ENCODE measurements at regions of chr1 and their contacts with region 1.

Region 1: DNA sequence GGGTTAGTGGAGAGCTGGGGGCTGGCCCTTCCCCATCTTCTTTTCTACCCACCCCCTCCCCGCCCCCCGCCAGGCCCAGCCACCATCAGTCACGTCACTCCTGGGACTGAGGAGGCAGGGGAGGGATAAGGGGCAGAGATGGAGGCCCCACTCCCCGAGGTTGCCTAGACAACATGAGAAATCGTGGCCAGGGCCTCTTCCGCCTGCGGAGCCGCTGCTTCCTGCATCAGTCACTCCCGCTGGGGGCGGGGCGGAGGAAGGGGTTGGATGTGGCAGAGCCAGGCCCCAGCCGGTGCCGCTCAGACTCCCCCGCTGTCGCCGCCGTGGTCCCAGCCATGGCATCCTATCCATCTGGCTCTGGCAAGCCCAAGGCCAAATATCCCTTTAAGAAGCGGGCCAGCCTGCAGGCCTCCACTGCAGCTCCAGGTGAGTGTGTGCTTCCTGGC is 1.2 kb downstream of the AMPD2 start:
- DNase-seq: peak; percentile 71
- H3K4me3 ChIP-seq: peak overlapping the region; percentile 83
- H3K27me3 ChIP-seq: no peaks in the 10 kb centered on the region
- CTCF ChIP-seq: no peak

Region 2: GRCh38 chr1:109483672-109484518 is 137.0 kb before region 1 on chr1 and contains the start of gene ATXN7L2:
- CTCF ChIA-PET with region 1: no interaction called
- POLR2A ChIA-PET with region 1: interaction called, 21 read pairs
- DNase-seq: peak; percentile 47
- H3K4me3 ChIP-seq: peak within 1 kb of the TSS; percentile 65
- H3K27me3 ChIP-seq: no peaks in the 10 kb centered on the region
- CTCF ChIP-seq: no peak
- polyA plus RNA-seq, gene ATXN7L2: 5.7 and 8.7 TPM in 2 replicates

Measured in BJ (cell line).